MCF 10A (cell line): ENCODE measurements at regions of chr10 and their contacts with region 1.

Region 1: GRCh38 chr10:118754720-118755480 is at the start of gene CACUL1:
- DNase-seq: peak; percentile 99
- H3K4me3 Mint-ChIP-seq: peak within 1 kb of the TSS; percentile 93
- H3K27ac Mint-ChIP-seq: peak within 1 kb of the TSS; percentile 95
- H3K4me1 Mint-ChIP-seq: peaks cover 19% of the 10 kb centered on the region
- H3K27me3 Mint-ChIP-seq: no peaks in the 10 kb centered on the region
- CTCF ChIP-seq: no peak
- total RNA-seq, gene CACUL1: 45.9 and 51.0 TPM in 2 replicates

Region 2: GRCh38 chr10:118687472-118687871 is 67.4 kb before region 1 on chr10:
- CTCF ChIA-PET with region 1: no interaction called
- POLR2A ChIA-PET with region 1: no interaction called
- intact Hi-C with region 1: no loop called
- DNase-seq: no peak
- H3K4me3 Mint-ChIP-seq: no peak overlapping the region
- H3K27ac Mint-ChIP-seq: no peak overlapping the region
- H3K4me1 Mint-ChIP-seq: no peaks in the 10 kb centered on the region
- H3K27me3 Mint-ChIP-seq: no peaks in the 10 kb centered on the region
- CTCF ChIP-seq: no peak

Region 3: GRCh38 chr10:118729641-118730258 is 25.1 kb before region 1 on chr10:
- CTCF ChIA-PET with region 1: interaction called, 9 read pairs
- POLR2A ChIA-PET with region 1: interaction called, 62 read pairs
- intact Hi-C with region 1: no loop called
- DNase-seq: no peak
- H3K4me3 Mint-ChIP-seq: no peak overlapping the region
- H3K27ac Mint-ChIP-seq: no peak overlapping the region
- H3K4me1 Mint-ChIP-seq: peaks cover 48% of the 10 kb centered on the region
- H3K27me3 Mint-ChIP-seq: no peaks in the 10 kb centered on the region
- CTCF ChIP-seq: no peak

Region 4: GRCh38 chr10:118792526-118792925 is 37.6 kb after region 1 on chr10:
- CTCF ChIA-PET with region 1: interaction called, 3 read pairs
- POLR2A ChIA-PET with region 1: interaction called, 74 read pairs
- intact Hi-C with region 1: no loop called
- DNase-seq: peak; percentile 60
- H3K4me3 Mint-ChIP-seq: no peak overlapping the region
- H3K27ac Mint-ChIP-seq: peak overlapping the region; percentile 6
- H3K4me1 Mint-ChIP-seq: peaks cover 12% of the 10 kb centered on the region
- H3K27me3 Mint-ChIP-seq: no peaks in the 10 kb centered on the region
- CTCF ChIP-seq: no peak

Region 5: GRCh38 chr10:118870467-118871243 is 115.8 kb after region 1 on chr10:
- CTCF ChIA-PET with region 1: no interaction called
- POLR2A ChIA-PET with region 1: interaction called, 10 read pairs
- intact Hi-C with region 1: no loop called
- DNase-seq: peak; percentile 99
- H3K4me3 Mint-ChIP-seq: peak overlapping the region; percentile 2
- H3K27ac Mint-ChIP-seq: peak overlapping the region; percentile 83
- H3K4me1 Mint-ChIP-seq: peaks cover 46% of the 10 kb centered on the region
- H3K27me3 Mint-ChIP-seq: no peaks in the 10 kb centered on the region
- CTCF ChIP-seq: no peak

Region 6: GRCh38 chr10:119022846-119023552 is 268.1 kb after region 1 on chr10:
- CTCF ChIA-PET with region 1: interaction called, 3 read pairs
- POLR2A ChIA-PET with region 1: interaction called, 11 read pairs
- intact Hi-C with region 1: loop called (anchors 5 kb)
- DNase-seq: peak; percentile 82
- H3K4me3 Mint-ChIP-seq: peak overlapping the region; percentile 12
- H3K27ac Mint-ChIP-seq: peak overlapping the region; percentile 67
- H3K4me1 Mint-ChIP-seq: peaks cover 52% of the 10 kb centered on the region
- H3K27me3 Mint-ChIP-seq: no peaks in the 10 kb centered on the region
- CTCF ChIP-seq: no peak